PC-9 (cell line): ENCODE measurements at regions of chr11 and their contacts with region 1.

Region 1: DNA sequence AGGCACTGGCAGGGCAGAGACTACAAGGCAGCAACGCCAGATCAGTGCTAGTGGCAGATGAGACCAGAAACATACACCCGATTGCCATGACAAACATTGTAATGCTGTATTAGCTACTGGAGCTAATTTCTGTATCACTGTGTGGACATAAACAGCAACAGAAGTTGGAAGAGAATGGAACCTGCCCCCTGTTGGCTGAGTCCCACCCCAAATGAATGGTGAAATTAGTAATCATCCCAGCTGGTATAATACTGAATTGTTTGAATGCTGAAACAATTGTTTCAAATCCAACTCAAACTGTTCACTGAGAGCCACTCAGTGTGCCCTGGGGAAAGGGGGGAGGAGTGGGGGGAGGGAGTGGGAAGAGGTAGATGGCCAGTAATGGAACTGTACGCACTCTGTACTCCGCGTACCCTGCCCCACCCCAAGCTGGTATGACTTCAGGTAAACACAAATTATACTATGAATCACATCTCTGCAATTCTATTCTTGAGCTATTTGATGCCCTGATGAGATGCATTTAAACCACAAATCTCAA is 11.2 kb upstream of the BIRC3 start:
- DNase-seq: peak; percentile 83 to 98
- H3K4me3 ChIP-seq: peak overlapping the region; percentile 33; the same call in 1 of the 2 replicates
- H3K27ac ChIP-seq: peak overlapping the region; percentile 85
- H3K4me1 ChIP-seq: peaks cover 37% of the 10 kb centered on the region
- H3K27me3 ChIP-seq: no peaks in the 10 kb centered on the region
- CTCF ChIP-seq: peak; percentile 66

Region 2: DNA sequence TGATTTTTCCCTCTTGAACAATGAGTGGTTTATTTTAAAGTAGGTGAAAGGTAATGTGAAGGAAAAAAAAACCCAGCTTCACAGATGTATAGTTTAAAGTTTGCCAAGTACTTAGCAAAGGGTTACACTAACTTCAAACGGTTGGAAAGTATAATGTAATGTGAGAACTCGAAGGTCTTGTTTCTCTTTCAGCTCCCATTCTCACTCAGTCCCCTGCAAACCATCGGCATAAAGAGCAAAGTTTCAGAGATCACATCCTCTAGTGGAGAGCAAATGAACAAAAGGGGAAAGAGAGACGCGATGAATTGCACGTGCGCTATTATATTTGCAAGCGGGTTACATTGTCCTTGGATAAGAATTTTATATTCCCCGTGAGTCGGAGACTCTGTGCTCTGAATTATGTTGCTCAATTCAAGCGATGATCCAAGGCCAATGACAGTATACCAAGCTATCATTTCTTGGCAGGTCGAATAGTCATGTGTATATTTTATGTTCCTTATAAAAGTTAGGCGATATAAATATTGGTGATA is 26.4 kb before region 1 on chr11:
- CTCF ChIA-PET with region 1: no interaction called
- POLR2A ChIA-PET with region 1: no interaction called
- intact Hi-C with region 1: no loop called
- DNase-seq: no peak
- H3K4me3 ChIP-seq: no peak overlapping the region
- H3K27ac ChIP-seq: no peak overlapping the region
- H3K4me1 ChIP-seq: peaks cover 12% of the 10 kb centered on the region
- H3K27me3 ChIP-seq: no peaks in the 10 kb centered on the region
- CTCF ChIP-seq: no peak

Region 3: GRCh38 chr11:102293873-102294601 is 12.1 kb before region 1 on chr11:
- CTCF ChIA-PET with region 1: interaction called, 11 read pairs
- POLR2A ChIA-PET with region 1: interaction called, 3 read pairs
- intact Hi-C with region 1: no loop called
- DNase-seq: peak in 1 of 2 experiments; percentile 64
- H3K4me3 ChIP-seq: no peak overlapping the region
- H3K27ac ChIP-seq: no peak overlapping the region
- H3K4me1 ChIP-seq: no peaks in the 10 kb centered on the region
- H3K27me3 ChIP-seq: no peaks in the 10 kb centered on the region
- CTCF ChIP-seq: peak; percentile 81

Region 4: DNA sequence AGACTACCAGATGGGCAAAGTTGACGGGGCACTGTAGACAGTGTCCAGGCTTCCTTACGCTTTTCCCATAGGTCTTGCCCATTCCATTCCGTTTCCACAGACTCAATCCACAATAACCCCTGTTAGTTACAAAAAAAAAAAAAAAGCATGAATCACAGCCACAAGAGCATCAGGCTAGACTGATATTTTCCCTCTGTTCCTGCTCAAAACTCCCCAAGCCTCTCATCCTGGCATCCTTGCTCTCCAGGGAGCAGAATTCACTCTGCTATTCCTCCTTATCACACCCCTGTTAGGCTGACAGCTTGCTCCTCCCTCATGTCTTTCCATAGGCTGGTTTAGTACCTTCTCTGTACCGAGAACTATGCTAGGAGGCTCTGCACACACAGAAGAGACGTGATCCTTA is 104.3 kb after region 1 on chr11:
- CTCF ChIA-PET with region 1: no interaction called
- POLR2A ChIA-PET with region 1: no interaction called
- intact Hi-C with region 1: no loop called
- DNase-seq: no peak
- H3K4me3 ChIP-seq: no peak overlapping the region
- H3K27ac ChIP-seq: no peak overlapping the region
- H3K4me1 ChIP-seq: peaks cover 13% of the 10 kb centered on the region
- H3K27me3 ChIP-seq: no peaks in the 10 kb centered on the region
- CTCF ChIP-seq: no peak

Region 5: DNA sequence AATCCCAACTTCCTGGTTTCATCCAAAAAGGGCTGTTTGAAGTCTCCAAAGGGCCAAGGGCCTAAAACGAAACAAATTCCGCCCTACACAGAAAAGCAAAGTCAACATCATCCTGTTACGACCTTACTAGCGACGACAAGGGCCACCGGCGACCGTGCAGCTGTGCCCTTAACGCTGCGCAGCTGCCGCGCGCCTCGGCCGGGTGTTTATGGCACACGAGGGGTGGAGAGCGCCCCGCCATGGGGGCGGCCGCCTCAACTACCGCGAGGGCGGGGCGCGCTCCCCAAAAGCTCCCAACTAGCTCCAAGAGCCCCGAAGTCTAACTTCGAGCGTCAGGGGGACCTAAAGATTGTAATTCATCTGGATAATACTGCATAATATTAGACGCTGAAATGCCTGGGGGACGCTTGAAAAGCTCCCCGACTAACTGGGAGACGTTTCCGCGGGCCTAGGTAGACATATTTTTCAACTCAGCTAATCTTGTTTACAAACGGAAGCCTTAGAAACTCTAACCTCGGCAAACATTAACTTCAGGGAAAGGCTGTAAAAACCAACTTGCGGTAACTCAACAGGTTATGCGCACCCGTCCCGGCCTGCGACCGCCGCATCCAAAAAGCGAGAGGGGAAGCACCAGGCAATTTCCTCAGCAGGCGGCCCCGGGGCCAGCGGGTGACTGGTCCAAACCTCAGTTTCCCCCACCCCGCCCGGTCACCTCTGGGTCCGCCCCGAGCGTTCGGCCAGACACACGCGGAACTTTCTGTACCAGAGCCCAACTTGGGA is 145.8 kb after region 1 on chr11:
- CTCF ChIA-PET with region 1: no interaction called
- POLR2A ChIA-PET with region 1: no interaction called
- intact Hi-C with region 1: loop called (anchors 5 kb)
- DNase-seq: peak; percentile 53 to 63
- H3K4me3 ChIP-seq: peak overlapping the region; percentile 88
- H3K27ac ChIP-seq: peak overlapping the region; percentile 72
- H3K4me1 ChIP-seq: peaks cover 62% of the 10 kb centered on the region
- H3K27me3 ChIP-seq: no peaks in the 10 kb centered on the region
- CTCF ChIP-seq: peak; percentile 20; the same call in 1 of the 2 replicates